Dorsolateral prefrontal cortex (tissue), 120 donors: ENCODE measurements at regions of chr3 and their contacts with region 1.

Region 1: GRCh38 chr3:4978204-4978965 is 852 bp upstream of the BHLHE40 start:
- DNase-seq: peak; percentile 53 to 94 (median 86)
- H3K4me3 ChIP-seq: peak overlapping the region; percentile 53 to 98 (median 82)
- H3K27ac ChIP-seq: peak overlapping the region; percentile 42 to 99 (median 97)
- H3K27me3 ChIP-seq: no peaks in the 10 kb centered on the region
- CTCF ChIP-seq: peak in 4 of 56 donors; percentile 9 to 13 (median 10)

Region 2: GRCh38 chr3:4712143-4712542 is 266.2 kb before region 1 on chr3:
- intact Hi-C with region 1: loop called in 1 of 2 experiments (anchors 5 kb)
- DNase-seq: no peak
- H3K4me3 ChIP-seq: peak overlapping the region in 1 of 59 donors; percentile 13
- H3K27ac ChIP-seq: peak overlapping the region in 12 of 59 donors; percentile 6 to 78 (median 36)
- H3K27me3 ChIP-seq: no peaks in the 10 kb centered on the region
- CTCF ChIP-seq: no peak

Region 3: GRCh38 chr3:4722103-4722502 is 256.3 kb before region 1 on chr3:
- intact Hi-C with region 1: loop called in 1 of 2 experiments (anchors 2 kb)
- DNase-seq: peak in 2 of 10 donors; percentile 30 to 42
- H3K4me3 ChIP-seq: no peak overlapping the region
- H3K27ac ChIP-seq: peak overlapping the region in 56 of 59 donors; percentile 3 to 89 (median 78)
- H3K27me3 ChIP-seq: no peaks in the 10 kb centered on the region
- CTCF ChIP-seq: peak in 53 of 56 donors; percentile 24 to 65 (median 50)

Region 4: GRCh38 chr3:4814305-4814903 is 164.0 kb before region 1 on chr3:
- intact Hi-C with region 1: loop called in 1 of 2 experiments (anchors 5 kb)
- DNase-seq: peak in 4 of 10 donors; percentile 37 to 67 (median 58)
- H3K4me3 ChIP-seq: no peak overlapping the region
- H3K27ac ChIP-seq: peak overlapping the region in 48 of 59 donors; percentile 3 to 83 (median 61)
- H3K27me3 ChIP-seq: no peaks in the 10 kb centered on the region
- CTCF ChIP-seq: no peak

Region 5: GRCh38 chr3:4935347-4935746 is 43.0 kb before region 1 on chr3:
- intact Hi-C with region 1: no loop called
- DNase-seq: no peak
- H3K4me3 ChIP-seq: no peak overlapping the region
- H3K27ac ChIP-seq: no peak overlapping the region
- H3K27me3 ChIP-seq: no peaks in the 10 kb centered on the region
- CTCF ChIP-seq: no peak

Region 6: GRCh38 chr3:5026331-5027218 is 48.2 kb after region 1 on chr3:
- intact Hi-C with region 1: loop called in 1 of 2 experiments (anchors 2 kb)
- DNase-seq: peak; percentile 42 to 83 (median 74)
- H3K4me3 ChIP-seq: peak overlapping the region; percentile 31 to 78 (median 63)
- H3K27ac ChIP-seq: peak overlapping the region in 56 of 59 donors; percentile 33 to 93 (median 85)
- H3K27me3 ChIP-seq: no peaks in the 10 kb centered on the region
- CTCF ChIP-seq: peak; percentile 18 to 74 (median 57)

Region 7: GRCh38 chr3:5122030-5122740 is 143.8 kb after region 1 on chr3 and contains the start of gene ARL8B:
- intact Hi-C with region 1: loop called in 1 of 2 experiments (anchors 2 kb)
- DNase-seq: peak; percentile 85 to 95 (median 90)
- H3K4me3 ChIP-seq: peak within 1 kb of the TSS; percentile 63 to 100 (median 99)
- H3K27ac ChIP-seq: peak within 1 kb of the TSS; percentile 53 to 99 (median 89)
- H3K27me3 ChIP-seq: no peaks in the 10 kb centered on the region
- CTCF ChIP-seq: peak; percentile 94 to 100 (median 99)
- total RNA-seq, gene ARL8B: 66.6 to 154 (median 120) TPM